ENCODE measurements at regions of chr11 and their contacts with region 1.

Region 1: GRCh38 chr11:68297812-68298658 is 14.4 kb upstream of the LRP5 start:
- DNase-seq: peak; percentile 81 to 82
- ATAC-seq: peak; percentile 87 to 95
- H3K4me3 ChIP-seq: peak overlapping the region; percentile 27; the same call in 2 of the 3 replicates
- H3K27ac ChIP-seq: peak overlapping the region; percentile 81 to 82
- H3K4me1 ChIP-seq: peaks cover 29% of the 10 kb centered on the region
- CTCF ChIP-seq: peak; percentile 97
- EP300 ChIP-seq: no peak
- POLR2A ChIP-seq: no peak
- RAD21 ChIP-seq: peak; percentile 89 to 96

Region 2: DNA sequence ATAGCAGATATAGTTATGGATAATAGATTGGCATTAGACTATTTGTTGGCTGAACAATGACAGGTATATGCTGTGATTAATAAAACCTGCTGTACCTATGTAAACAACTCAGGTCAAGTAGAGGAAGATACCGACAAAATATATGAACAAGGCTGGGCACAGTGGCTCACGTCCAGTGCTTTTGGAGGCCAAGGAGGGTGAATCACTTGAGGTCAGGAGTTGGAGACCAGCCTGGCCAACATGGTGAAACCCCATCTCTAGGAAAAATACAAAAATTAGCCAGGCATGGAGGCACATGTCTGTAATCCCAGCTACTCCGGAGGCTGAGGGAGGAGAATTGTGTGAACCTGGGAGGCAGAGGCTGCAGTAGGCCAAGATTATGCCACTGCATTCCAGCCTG is 162.9 kb before region 1 on chr11:
- CTCF ChIA-PET with region 1: no interaction called
- POLR2A ChIA-PET with region 1: no interaction called
- DNase-seq: no peak
- ATAC-seq: no peak
- H3K4me3 ChIP-seq: no peak overlapping the region
- H3K27ac ChIP-seq: no peak overlapping the region
- H3K4me1 ChIP-seq: peaks cover 15% of the 10 kb centered on the region
- CTCF ChIP-seq: no peak
- EP300 ChIP-seq: no peak
- POLR2A ChIP-seq: no peak
- RAD21 ChIP-seq: no peak

Region 3: GRCh38 chr11:68206187-68206601 is 91.8 kb before region 1 on chr11:
- CTCF ChIA-PET with region 1: interaction called, 41 read pairs
- POLR2A ChIA-PET with region 1: no interaction called
- DNase-seq: peak; percentile 60 to 73
- ATAC-seq: peak; percentile 65 to 74; a peak in 5 of 6 replicates
- H3K4me3 ChIP-seq: no peak overlapping the region
- H3K27ac ChIP-seq: no peak overlapping the region
- H3K4me1 ChIP-seq: peaks cover 22% of the 10 kb centered on the region
- CTCF ChIP-seq: peak; percentile 74
- EP300 ChIP-seq: no peak
- POLR2A ChIP-seq: no peak
- RAD21 ChIP-seq: peak; percentile 63 to 74

Region 4: DNA sequence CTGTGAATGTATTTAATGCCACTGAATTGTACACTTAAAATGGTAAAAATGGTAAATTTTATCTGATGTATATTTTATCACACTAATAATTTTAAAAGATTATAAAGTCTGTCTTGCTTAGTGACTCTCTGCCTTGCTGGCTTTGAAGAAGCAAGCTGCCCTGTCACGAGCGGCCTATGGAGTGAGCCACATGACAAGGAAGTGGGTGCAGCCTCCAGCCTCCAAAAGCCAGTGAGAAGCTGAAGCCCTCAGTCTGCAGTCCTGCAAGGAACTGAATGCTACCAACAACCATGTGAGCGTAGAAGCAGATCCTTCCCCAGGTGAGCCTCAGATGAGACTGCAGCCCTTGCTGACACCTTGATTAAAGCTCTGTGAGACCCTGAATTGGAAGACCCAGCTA is 46.3 kb before region 1 on chr11:
- CTCF ChIA-PET with region 1: interaction called, 131 read pairs
- POLR2A ChIA-PET with region 1: no interaction called
- DNase-seq: no peak
- ATAC-seq: no peak
- H3K4me3 ChIP-seq: no peak overlapping the region
- H3K27ac ChIP-seq: no peak overlapping the region
- H3K4me1 ChIP-seq: peaks cover 8% of the 10 kb centered on the region
- CTCF ChIP-seq: no peak
- EP300 ChIP-seq: no peak
- POLR2A ChIP-seq: no peak
- RAD21 ChIP-seq: no peak

Region 5: GRCh38 chr11:68271781-68272608 is 26.0 kb before region 1 on chr11 and contains the start of gene C11orf24:
- CTCF ChIA-PET with region 1: interaction called, 77 read pairs
- POLR2A ChIA-PET with region 1: interaction called, 13 read pairs
- DNase-seq: peak; percentile 95 to 96
- ATAC-seq: peak; percentile 91 to 96
- H3K4me3 ChIP-seq: peak within 1 kb of the TSS; percentile 87
- H3K27ac ChIP-seq: peak within 1 kb of the TSS; percentile 97 to 98
- H3K4me1 ChIP-seq: peaks cover 33% of the 10 kb centered on the region
- CTCF ChIP-seq: no peak
- EP300 ChIP-seq: no peak
- POLR2A ChIP-seq: peak; percentile 85
- RAD21 ChIP-seq: no peak
- polyA plus RNA-seq, gene C11orf24: 29.4 and 30.6 TPM in 2 replicates

Region 6: DNA sequence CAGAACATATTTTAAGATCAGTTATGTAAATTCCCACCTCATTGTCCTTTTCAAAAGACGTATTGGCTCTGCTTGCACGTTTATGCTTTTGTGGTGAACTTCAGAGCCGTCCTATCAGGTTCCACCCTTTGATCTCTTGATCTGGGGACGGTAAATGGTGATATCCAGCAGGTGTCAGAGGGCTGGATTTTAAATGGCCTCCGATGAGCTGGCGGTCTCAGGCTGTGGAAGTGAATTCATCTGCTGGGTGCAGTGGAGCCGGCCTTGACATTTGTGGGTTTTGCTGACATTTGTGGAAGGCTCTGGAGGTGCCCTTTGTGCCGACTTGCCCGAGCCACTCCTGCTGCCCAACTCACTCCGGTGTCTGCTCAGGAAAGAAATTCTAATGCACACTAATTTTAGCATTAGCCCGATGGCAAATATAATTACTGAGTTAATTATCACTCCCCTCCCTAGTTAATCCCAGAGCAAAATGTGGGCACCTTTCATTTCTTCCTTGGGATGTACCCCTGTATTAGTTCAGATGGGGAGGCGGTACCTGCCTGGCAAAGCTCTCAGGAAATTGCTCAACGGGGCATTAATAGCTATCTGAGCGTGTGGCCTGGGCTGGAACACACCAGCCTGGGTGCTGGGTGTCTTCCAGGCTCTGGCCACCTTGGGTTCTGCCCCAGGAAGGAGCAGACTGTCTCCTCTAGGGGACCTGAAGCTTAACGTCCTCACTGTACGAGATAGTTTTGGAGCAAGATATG is 23.4 kb after region 1 on chr11:
- CTCF ChIA-PET with region 1: interaction called, 30 read pairs
- POLR2A ChIA-PET with region 1: no interaction called
- DNase-seq: no peak
- ATAC-seq: peak; percentile 34 to 35; a peak in 4 of 6 replicates
- H3K4me3 ChIP-seq: no peak overlapping the region
- H3K27ac ChIP-seq: peak overlapping the region in 1 of 2 experiments; percentile 48; a peak in 3 of 6 replicates
- H3K4me1 ChIP-seq: peaks cover 32% of the 10 kb centered on the region
- CTCF ChIP-seq: no peak
- EP300 ChIP-seq: no peak
- POLR2A ChIP-seq: no peak
- RAD21 ChIP-seq: no peak

Region 7: GRCh38 chr11:68383976-68384501 is 86.0 kb after region 1 on chr11:
- CTCF ChIA-PET with region 1: interaction called, 96 read pairs
- POLR2A ChIA-PET with region 1: no interaction called
- DNase-seq: peak; percentile 60 to 62
- ATAC-seq: peak in 1 of 2 experiments; percentile 5; a peak in 2 of 6 replicates
- H3K4me3 ChIP-seq: no peak overlapping the region
- H3K27ac ChIP-seq: peak overlapping the region in 1 of 2 experiments; percentile 44; a peak in 2 of 6 replicates
- H3K4me1 ChIP-seq: peaks cover 43% of the 10 kb centered on the region
- CTCF ChIP-seq: peak; percentile 95
- EP300 ChIP-seq: no peak
- POLR2A ChIP-seq: no peak
- RAD21 ChIP-seq: peak; percentile 94 to 95

Region 8: GRCh38 chr11:68617925-68618809 is 320.1 kb after region 1 on chr11:
- CTCF ChIA-PET with region 1: no interaction called
- POLR2A ChIA-PET with region 1: no interaction called
- DNase-seq: no peak
- ATAC-seq: peak; percentile 28 to 56
- H3K4me3 ChIP-seq: no peak overlapping the region
- H3K27ac ChIP-seq: no peak overlapping the region
- H3K4me1 ChIP-seq: no peaks in the 10 kb centered on the region
- CTCF ChIP-seq: no peak
- EP300 ChIP-seq: no peak
- POLR2A ChIP-seq: no peak
- RAD21 ChIP-seq: no peak